Calu3 (cell line): ENCODE measurements at regions of chr15 and their contacts with region 1.

Region 1: DNA sequence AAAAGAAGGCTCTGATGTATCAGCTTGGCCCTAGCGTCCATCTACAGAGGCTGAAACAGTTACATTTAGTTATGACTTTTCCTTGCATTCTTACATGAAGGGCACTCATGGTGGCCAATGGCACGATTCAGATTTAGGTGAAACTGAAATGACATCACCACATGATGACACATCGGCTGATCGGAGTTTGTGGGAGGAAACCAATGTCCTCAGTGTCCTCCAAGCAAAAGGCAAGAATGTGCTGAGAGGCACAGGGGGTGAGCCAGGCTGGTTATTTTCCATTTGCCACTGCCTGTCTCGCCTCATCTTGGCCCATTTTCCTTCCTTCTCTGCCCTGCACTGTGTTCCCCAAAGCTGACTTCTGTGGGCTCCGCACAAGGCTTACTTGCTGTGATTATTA is 34.4 kb downstream of the TARS3 start:
- DNase-seq: no peak
- H3K4me3 Mint-ChIP-seq: no peak overlapping the region
- H3K27ac Mint-ChIP-seq: no peak overlapping the region
- H3K4me1 Mint-ChIP-seq: no peaks in the 10 kb centered on the region
- H3K27me3 Mint-ChIP-seq: no peaks in the 10 kb centered on the region
- CTCF ChIP-seq: no peak

Region 2: DNA sequence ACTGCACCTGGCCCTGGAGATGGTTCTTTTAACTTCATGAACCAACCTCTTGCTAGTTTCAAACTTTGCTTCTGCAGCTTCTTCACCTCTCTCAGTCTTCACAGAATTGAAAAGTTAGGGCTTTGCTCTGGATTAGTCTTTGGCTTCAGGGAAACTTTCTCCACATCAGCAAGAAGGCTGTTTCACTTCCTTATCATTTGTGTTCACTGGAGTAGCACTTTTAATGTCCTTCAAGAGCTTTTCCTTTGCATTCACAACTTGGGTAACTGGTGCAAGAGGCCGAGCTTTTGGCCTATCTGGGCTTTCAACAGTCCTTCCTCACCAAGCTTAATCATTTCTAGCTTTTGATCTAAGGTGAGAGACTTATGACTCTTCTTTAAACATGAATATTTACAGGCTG is 22.0 kb before region 1 on chr15:
- CTCF ChIA-PET with region 1: no interaction called
- intact Hi-C with region 1: loop called (anchors 1 kb)
- DNase-seq: no peak
- H3K4me3 Mint-ChIP-seq: no peak overlapping the region
- H3K27ac Mint-ChIP-seq: no peak overlapping the region
- H3K4me1 Mint-ChIP-seq: no peaks in the 10 kb centered on the region
- H3K27me3 Mint-ChIP-seq: no peaks in the 10 kb centered on the region
- CTCF ChIP-seq: no peak